ENCODE measurements at regions of chr2 and their contacts with region 1.

Region 1: GRCh38 chr2:29841386-29842004 is 79.9 kb downstream of the ALK start:
- DNase-seq: peak; percentile 71
- H3K4me3 ChIP-seq: no peak overlapping the region
- H3K27ac ChIP-seq: no peak overlapping the region
- H3K4me1 ChIP-seq: no peaks in the 10 kb centered on the region
- H3K27me3 ChIP-seq: no peaks in the 10 kb centered on the region
- CTCF ChIP-seq: peak; percentile 93

Region 2: DNA sequence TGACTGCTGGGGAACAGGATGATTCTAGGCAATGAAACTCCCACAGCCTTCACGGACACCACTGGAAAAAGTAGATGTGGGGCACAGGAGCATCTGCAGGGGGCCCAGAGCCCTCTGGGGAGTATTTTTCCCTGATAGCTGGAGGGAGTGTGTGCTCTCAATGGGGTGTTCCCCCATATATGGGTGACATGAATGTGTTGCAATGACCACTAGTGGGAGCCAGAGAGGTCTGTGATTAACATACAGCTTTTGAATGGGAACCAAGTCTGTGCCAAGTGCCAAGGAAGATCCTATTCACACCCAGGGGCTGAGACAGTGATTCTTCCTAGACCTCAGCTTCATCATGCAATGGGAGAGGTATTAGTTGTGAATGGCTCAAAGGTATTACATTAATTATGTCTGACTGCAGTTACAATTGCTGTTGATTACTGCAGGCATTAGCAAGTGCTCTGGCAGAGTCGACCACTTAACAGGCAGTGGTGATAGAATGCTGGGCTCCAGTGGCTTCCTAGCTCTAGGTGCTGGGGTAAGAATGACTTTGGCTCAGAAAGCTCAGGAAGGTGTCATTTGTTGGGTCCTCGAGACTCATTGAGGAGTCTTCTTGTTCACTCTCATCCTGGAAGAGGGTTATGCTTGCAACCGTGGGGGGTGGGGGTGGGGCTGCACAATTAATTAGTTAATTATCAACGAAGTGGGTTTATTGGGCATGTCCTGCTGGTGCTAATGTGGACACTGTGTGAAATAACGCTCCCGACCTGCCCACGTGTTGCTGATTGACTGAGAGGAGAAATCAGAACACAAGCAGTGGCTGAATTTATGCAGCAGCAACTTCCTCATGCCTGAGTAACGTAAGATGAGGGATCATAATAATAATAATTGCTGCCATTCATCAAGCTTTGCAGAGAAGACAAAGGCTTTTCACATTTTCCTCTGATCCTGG is 532.1 kb before region 1 on chr2:
- CTCF ChIA-PET with region 1: no interaction called
- POLR2A ChIA-PET with region 1: no interaction called
- intact Hi-C with region 1: loop called (anchors 2 kb)
- DNase-seq: peak; percentile 89
- H3K4me3 ChIP-seq: no peak overlapping the region
- H3K27ac ChIP-seq: no peak overlapping the region
- H3K4me1 ChIP-seq: peaks cover 21% of the 10 kb centered on the region
- H3K27me3 ChIP-seq: no peaks in the 10 kb centered on the region
- CTCF ChIP-seq: peak; percentile 89

Region 3: DNA sequence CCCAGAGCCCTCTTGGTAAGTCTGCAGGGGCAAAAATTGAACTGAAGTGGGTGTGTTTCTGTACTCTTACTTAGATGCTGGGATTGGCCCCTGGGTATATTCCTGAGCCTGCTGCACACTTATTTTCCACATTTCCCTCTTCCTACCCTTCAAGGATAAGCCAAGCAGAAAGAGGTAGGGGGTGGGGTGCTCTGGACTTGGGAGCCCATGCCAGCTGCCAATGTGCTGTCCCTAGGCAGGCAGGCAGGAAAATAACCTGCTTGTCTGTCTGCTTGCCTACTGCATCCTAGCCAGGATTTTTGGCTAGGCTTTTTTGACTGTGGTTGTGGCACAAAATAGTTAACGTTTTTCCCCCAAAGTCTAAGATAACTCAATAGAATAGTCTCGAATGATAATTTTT is 154.4 kb before region 1 on chr2:
- CTCF ChIA-PET with region 1: no interaction called
- POLR2A ChIA-PET with region 1: no interaction called
- intact Hi-C with region 1: no loop called
- DNase-seq: no peak
- H3K4me3 ChIP-seq: no peak overlapping the region
- H3K27ac ChIP-seq: no peak overlapping the region
- H3K4me1 ChIP-seq: no peaks in the 10 kb centered on the region
- H3K27me3 ChIP-seq: no peaks in the 10 kb centered on the region
- CTCF ChIP-seq: no peak

Region 4: GRCh38 chr2:30127016-30127893 is 285.8 kb after region 1 on chr2:
- CTCF ChIA-PET with region 1: no interaction called
- POLR2A ChIA-PET with region 1: interaction called, 12 read pairs
- intact Hi-C with region 1: no loop called
- DNase-seq: peak; percentile 96
- H3K4me3 ChIP-seq: peak overlapping the region; percentile 17
- H3K27ac ChIP-seq: peak overlapping the region; percentile 99
- H3K4me1 ChIP-seq: peaks cover 27% of the 10 kb centered on the region
- H3K27me3 ChIP-seq: no peaks in the 10 kb centered on the region
- CTCF ChIP-seq: no peak

Measured in A673 (cell line).